ENCODE measurements at regions of chr2 and their contacts with region 1.

Region 1: GRCh38 chr2:190369635-190370034 is 26.2 kb downstream of the INPP1 start:
- DNase-seq: no peak
- ATAC-seq: no peak
- H3K4me3 ChIP-seq: no peak overlapping the region
- H3K27ac ChIP-seq: no peak overlapping the region
- H3K4me1 ChIP-seq: peaks cover 4% of the 10 kb centered on the region
- H3K27me3 ChIP-seq: no peaks in the 10 kb centered on the region

Region 2: DNA sequence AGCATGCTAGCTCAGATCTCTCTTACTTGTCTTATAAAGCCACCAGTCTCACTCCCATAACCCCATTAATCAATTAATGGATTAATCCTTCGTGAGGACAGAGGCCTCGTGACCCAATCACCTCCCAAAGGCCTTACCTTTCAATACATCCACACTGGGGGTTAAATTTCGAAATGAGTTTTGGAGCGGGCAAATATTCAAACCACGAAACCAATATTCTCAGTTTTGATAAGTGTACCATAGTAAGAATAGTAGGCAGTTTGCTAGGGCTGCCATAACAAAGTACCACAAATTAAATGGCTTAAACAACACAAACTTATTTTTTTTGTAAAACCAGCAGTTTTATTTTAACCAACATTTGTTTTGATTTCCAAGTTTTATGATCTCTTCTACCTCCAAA is 65.2 kb before region 1 on chr2:
- intact Hi-C with region 1: no loop called
- DNase-seq: no peak
- ATAC-seq: no peak
- H3K4me3 ChIP-seq: no peak overlapping the region
- H3K27ac ChIP-seq: no peak overlapping the region
- H3K4me1 ChIP-seq: no peaks in the 10 kb centered on the region
- H3K27me3 ChIP-seq: no peaks in the 10 kb centered on the region

Region 3: DNA sequence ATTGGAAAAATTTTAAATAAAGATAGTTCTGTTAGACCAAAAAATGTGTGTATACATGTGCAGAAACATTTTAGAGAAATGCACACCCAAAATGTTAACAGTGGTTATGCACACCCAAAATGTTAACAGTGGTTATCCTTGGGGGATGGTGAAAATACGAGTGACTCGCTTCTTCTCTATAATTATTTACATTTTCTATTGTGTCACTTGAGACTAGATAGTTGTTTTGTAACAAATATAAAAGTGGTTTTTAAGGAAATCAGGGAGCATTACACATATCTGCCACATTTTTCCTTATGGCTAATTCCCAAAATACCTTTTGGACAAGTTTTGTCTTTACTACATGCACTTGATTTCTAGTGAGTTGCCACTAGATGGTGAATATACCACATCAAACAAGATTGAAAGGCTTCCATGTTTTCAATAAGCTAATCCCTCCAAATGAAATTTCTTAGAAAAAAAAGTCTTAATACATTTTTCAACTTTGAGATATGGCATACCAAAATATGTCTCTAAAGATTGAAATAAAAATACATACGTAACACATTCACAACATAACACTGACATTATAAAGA is 41.0 kb before region 1 on chr2:
- intact Hi-C with region 1: loop called in 1 of 4 experiments (anchors 5 kb)
- DNase-seq: no peak
- ATAC-seq: no peak
- H3K4me3 ChIP-seq: no peak overlapping the region
- H3K27ac ChIP-seq: no peak overlapping the region
- H3K4me1 ChIP-seq: no peaks in the 10 kb centered on the region
- H3K27me3 ChIP-seq: no peaks in the 10 kb centered on the region